WTC11 (cell line): ENCODE measurements at regions of chr2 and their contacts with region 1.

Region 1: GRCh38 chr2:159615140-159615951 is 1.0 kb downstream of the BAZ2B start:
- DNase-seq: peak; percentile 81
- ATAC-seq: peak; percentile 88
- H3K4me3 Mint-ChIP-seq: peak overlapping the region; percentile 90
- H3K27ac Mint-ChIP-seq: peak overlapping the region; percentile 99
- H3K4me1 Mint-ChIP-seq: peaks cover 46% of the 10 kb centered on the region
- H3K27me3 Mint-ChIP-seq: no peaks in the 10 kb centered on the region
- CTCF ChIP-seq: no peak

Region 2: GRCh38 chr2:159518321-159519005 is 96.9 kb before region 1 on chr2:
- CTCF ChIA-PET with region 1: no interaction called
- POLR2A ChIA-PET with region 1: interaction called, 10 read pairs
- DNase-seq: no peak
- ATAC-seq: no peak
- H3K4me3 Mint-ChIP-seq: no peak overlapping the region
- H3K27ac Mint-ChIP-seq: peak overlapping the region; percentile 55
- H3K4me1 Mint-ChIP-seq: peaks cover 39% of the 10 kb centered on the region
- H3K27me3 Mint-ChIP-seq: no peaks in the 10 kb centered on the region
- CTCF ChIP-seq: no peak

Region 3: GRCh38 chr2:159712143-159712928 is 97.0 kb after region 1 on chr2 and contains the start of gene MARCHF7:
- CTCF ChIA-PET with region 1: interaction called, 8 read pairs
- POLR2A ChIA-PET with region 1: interaction called, 73 read pairs
- DNase-seq: peak; percentile 96
- ATAC-seq: peak; percentile 93
- H3K4me3 Mint-ChIP-seq: peak within 1 kb of the TSS; percentile 99
- H3K27ac Mint-ChIP-seq: peak within 1 kb of the TSS; percentile 100
- H3K4me1 Mint-ChIP-seq: peaks cover 46% of the 10 kb centered on the region
- H3K27me3 Mint-ChIP-seq: no peaks in the 10 kb centered on the region
- CTCF ChIP-seq: no peak
- total RNA-seq, gene MARCHF7: 84.0 to 109 TPM (median 97.6 TPM) in 3 replicates

Region 4: DNA sequence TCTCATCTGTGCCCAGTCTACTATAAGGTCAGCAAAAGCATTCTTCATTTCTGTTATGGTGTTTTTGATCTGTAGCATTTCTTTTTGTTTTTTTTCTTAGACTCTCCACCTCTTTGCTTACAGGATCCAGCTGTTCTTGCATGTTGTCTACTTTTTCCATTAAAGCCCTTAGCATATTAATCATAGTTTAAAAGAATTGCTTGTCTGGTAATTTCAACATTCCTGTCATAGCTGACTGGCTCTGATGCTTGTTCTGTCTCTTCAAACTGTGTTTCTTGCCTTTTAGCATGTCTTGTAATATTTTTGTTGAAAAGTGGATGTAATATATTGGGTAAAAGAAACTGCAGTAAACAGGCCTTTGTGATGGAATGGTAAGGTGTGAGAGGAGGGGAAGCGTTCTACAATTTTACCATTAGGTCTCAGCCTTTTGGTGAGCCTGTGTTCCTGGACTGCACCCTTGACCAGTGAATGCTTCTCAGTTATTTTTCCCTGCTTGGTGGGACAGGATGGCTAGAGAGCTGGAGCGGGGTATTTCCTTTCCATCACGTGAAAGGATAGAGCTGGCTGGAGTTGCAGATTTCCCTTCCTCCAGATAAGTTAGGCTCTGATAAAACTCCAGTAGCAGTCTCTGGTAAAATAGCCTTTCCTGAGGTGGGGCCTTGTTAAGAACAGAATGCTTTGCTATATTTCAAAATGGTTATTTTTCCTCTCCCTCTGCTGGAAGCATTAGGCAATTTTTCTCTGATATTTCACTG is 381.6 kb after region 1 on chr2:
- CTCF ChIA-PET with region 1: no interaction called
- POLR2A ChIA-PET with region 1: no interaction called
- DNase-seq: no peak
- ATAC-seq: no peak
- H3K4me3 Mint-ChIP-seq: no peak overlapping the region
- H3K27ac Mint-ChIP-seq: no peak overlapping the region
- H3K4me1 Mint-ChIP-seq: peaks cover 11% of the 10 kb centered on the region
- H3K27me3 Mint-ChIP-seq: no peaks in the 10 kb centered on the region
- CTCF ChIP-seq: no peak